IMR-90 (cell line): ENCODE measurements at regions of chr15 and their contacts with region 1.

Region 1: GRCh38 chr15:78314181-78314581 is 14.8 kb upstream of the SKIC8 start:
- DNase-seq: no peak
- ATAC-seq: no peak
- H3K4me3 ChIP-seq: no peak overlapping the region
- H3K27ac ChIP-seq: no peak overlapping the region
- H3K4me1 ChIP-seq: no peaks in the 10 kb centered on the region
- H3K27me3 ChIP-seq: peaks cover 30% of the 10 kb centered on the region; the same call in 1 of the 2 replicates
- CTCF ChIP-seq: no peak
- POLR2A ChIP-seq: no peak
- RAD21 ChIP-seq: no peak

Region 2: GRCh38 chr15:78415286-78415685 is 101.1 kb after region 1 on chr15:
- CTCF ChIA-PET with region 1: no interaction called
- POLR2A ChIA-PET with region 1: no interaction called
- dilution Hi-C with region 1: no loop called
- in situ Hi-C with region 1: loop called (anchors 5 kb)
- intact Hi-C with region 1: no loop called
- DNase-seq: no peak
- ATAC-seq: peak; percentile 69
- H3K4me3 ChIP-seq: no peak overlapping the region
- H3K27ac ChIP-seq: no peak overlapping the region
- H3K4me1 ChIP-seq: no peaks in the 10 kb centered on the region
- H3K27me3 ChIP-seq: peaks cover 29% of the 10 kb centered on the region
- CTCF ChIP-seq: peak; percentile 38
- POLR2A ChIP-seq: no peak
- RAD21 ChIP-seq: peak; percentile 28; the same call in 1 of the 2 replicates